ENCODE measurements at regions of chr9 and their contacts with region 1.

Region 1: GRCh38 chr9:89602978-89603766 is 1.6 kb upstream of the GADD45G start:
- DNase-seq: peak; percentile 88 to 91
- ATAC-seq: peak; percentile 19 to 65 (median 43)
- H3K4me3 ChIP-seq: peak overlapping the region in 9 of 10 donors; percentile 75 to 90 (median 85)
- H3K27ac ChIP-seq: peak overlapping the region in 8 of 10 donors; percentile 50 to 97 (median 92)
- H3K4me1 ChIP-seq: peaks cover 3 to 48% (median 43%) of the 10 kb centered on the region in 9 donors
- H3K27me3 ChIP-seq: peaks cover 0 to 13% (median 0%) of the 10 kb centered on the region in 7 donors
- CTCF ChIP-seq: peak; percentile 74 to 91 (median 86)

Region 2: GRCh38 chr9:89686095-89686494 is 82.9 kb after region 1 on chr9:
- intact Hi-C with region 1: loop called in 2 of 10 experiments (anchors 2 kb)
- DNase-seq: no peak
- ATAC-seq: peak in 6 of 8 donors; percentile 16 to 69 (median 36)
- H3K4me3 ChIP-seq: no peak overlapping the region
- H3K27ac ChIP-seq: peak overlapping the region in 5 of 10 donors; percentile 73 to 79 (median 78)
- H3K4me1 ChIP-seq: peaks cover 7 to 30% (median 23%) of the 10 kb centered on the region in 9 donors
- H3K27me3 ChIP-seq: no peaks in the 10 kb centered on the region
- CTCF ChIP-seq: no peak

Region 3: GRCh38 chr9:89755821-89756220 is 152.6 kb after region 1 on chr9:
- intact Hi-C with region 1: loop called in 3 of 10 experiments (anchors 5 to 10 kb)
- DNase-seq: peak in 1 of 2 donors; percentile 62
- ATAC-seq: peak in 7 of 8 donors; percentile 42 to 84 (median 66)
- H3K4me3 ChIP-seq: no peak overlapping the region
- H3K27ac ChIP-seq: no peak overlapping the region
- H3K4me1 ChIP-seq: peaks cover 0 to 21% (median 8%) of the 10 kb centered on the region in 9 donors
- H3K27me3 ChIP-seq: no peaks in the 10 kb centered on the region
- CTCF ChIP-seq: no peak

Region 4: GRCh38 chr9:89919169-89919681 is 316.1 kb after region 1 on chr9:
- intact Hi-C with region 1: loop called in 9 of 10 experiments (anchors 2 to 10 kb)
- DNase-seq: peak; percentile 33 to 56
- ATAC-seq: peak; percentile 86 to 95 (median 94)
- H3K4me3 ChIP-seq: no peak overlapping the region
- H3K27ac ChIP-seq: no peak overlapping the region
- H3K4me1 ChIP-seq: peaks cover 0 to 22% (median 0%) of the 10 kb centered on the region in 9 donors
- H3K27me3 ChIP-seq: peaks cover 0 to under 1% (median 0%) of the 10 kb centered on the region in 7 donors
- CTCF ChIP-seq: peak; percentile 4 to 71 (median 52)

Region 5: GRCh38 chr9:90095682-90096081 is 492.5 kb after region 1 on chr9:
- intact Hi-C with region 1: loop called in 5 of 10 experiments (anchors 1 to 5 kb)
- DNase-seq: no peak
- ATAC-seq: peak in 3 of 8 donors; percentile 5 to 18 (median 14)
- H3K4me3 ChIP-seq: no peak overlapping the region
- H3K27ac ChIP-seq: no peak overlapping the region
- H3K4me1 ChIP-seq: peaks cover 0 to 18% (median 0%) of the 10 kb centered on the region in 9 donors
- H3K27me3 ChIP-seq: peaks cover 0 to 7% (median 3%) of the 10 kb centered on the region in 7 donors
- CTCF ChIP-seq: no peak

Measured in heart right ventricle (tissue), 16 donors.